ENCODE measurements at regions of chr1 and their contacts with region 1.

Region 1: GRCh38 chr1:112466078-112466660 is 42.6 kb upstream of the WNT2B start:
- DNase-seq: peak; percentile 96
- H3K4me3 ChIP-seq: peak overlapping the region; percentile 25 to 33
- H3K27ac ChIP-seq: peak overlapping the region; percentile 82 to 85
- H3K4me1 ChIP-seq: no peaks in the 10 kb centered on the region
- H3K27me3 ChIP-seq: no peaks in the 10 kb centered on the region
- CTCF ChIP-seq: peak; percentile 83 to 97 (median 91)
- POLR2A ChIP-seq: no peak

Region 2: DNA sequence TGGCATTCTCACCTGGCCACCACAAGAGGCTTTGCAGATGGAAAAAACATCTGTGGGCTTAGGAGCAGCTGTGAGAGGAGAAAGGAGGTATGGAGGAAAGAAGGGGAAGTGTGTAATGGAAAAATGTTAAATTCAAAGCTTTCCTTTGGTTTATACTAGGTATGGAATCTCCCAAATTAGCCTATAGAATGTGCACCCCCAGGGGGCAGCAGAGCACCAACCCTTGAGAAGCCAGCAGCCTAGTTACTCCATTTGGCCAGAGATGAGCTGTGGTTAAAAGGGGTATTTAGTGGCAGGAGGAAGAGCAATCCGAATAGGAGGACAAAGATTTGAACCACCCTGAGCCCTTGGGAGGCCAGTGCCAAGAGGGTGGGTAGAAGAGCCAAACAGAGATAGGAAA is 167.6 kb before region 1 on chr1:
- intact Hi-C with region 1: no loop called
- DNase-seq: no peak
- H3K4me3 ChIP-seq: no peak overlapping the region
- H3K27ac ChIP-seq: no peak overlapping the region
- H3K4me1 ChIP-seq: no peaks in the 10 kb centered on the region
- H3K27me3 ChIP-seq: no peaks in the 10 kb centered on the region
- CTCF ChIP-seq: no peak
- POLR2A ChIP-seq: no peak

Region 3: DNA sequence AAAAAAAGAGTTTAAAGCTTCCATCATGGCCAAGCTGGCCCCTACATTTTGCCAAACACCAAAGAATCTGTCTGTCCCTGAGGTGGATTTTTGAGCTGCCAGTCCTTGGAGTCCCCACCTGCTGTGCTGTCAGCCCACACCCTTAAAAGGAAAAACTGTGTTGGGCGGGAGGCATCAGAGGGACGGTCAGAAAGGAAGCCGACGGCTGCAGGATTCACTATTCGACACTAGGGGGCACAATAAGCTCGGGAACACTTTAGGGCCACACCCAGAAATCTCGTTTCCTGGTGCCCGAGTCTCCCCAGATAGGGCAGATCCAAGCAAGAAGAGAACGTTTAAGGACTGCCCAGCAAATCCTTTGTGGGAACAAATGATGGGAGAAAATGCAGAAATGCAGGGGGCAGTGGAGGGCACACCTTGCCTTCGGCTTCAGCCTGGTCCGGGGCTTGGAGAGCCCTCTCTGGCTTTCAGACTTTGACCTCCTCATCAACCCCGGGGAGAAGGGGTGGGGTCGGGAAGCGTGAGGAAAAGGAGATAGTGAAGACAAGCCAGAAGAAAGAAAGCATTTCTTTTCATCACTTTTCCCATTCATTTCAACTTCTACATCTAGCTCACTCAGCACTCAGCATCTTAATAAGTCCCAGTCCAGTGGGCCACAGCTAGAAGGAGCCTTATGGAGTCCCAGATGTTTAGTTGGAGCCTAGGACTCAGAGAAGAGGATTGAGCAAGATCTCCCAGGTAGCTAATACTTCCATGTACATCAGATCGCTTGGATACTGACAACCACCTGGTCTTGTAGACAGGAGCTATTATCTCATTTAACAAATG is 75.2 kb before region 1 on chr1:
- intact Hi-C with region 1: loop called (anchors 5 kb)
- DNase-seq: peak; percentile 91 to 94
- H3K4me3 ChIP-seq: peak overlapping the region; percentile 34 to 38
- H3K27ac ChIP-seq: peak overlapping the region; percentile 92 to 99
- H3K4me1 ChIP-seq: peaks cover 13 to 18% of the 10 kb centered on the region in 2 donors
- H3K27me3 ChIP-seq: no peaks in the 10 kb centered on the region
- CTCF ChIP-seq: peak; percentile 92 to 95 (median 93)
- POLR2A ChIP-seq: no peak

Region 4: GRCh38 chr1:112625696-112626095 is 159.5 kb after region 1 on chr1:
- intact Hi-C with region 1: no loop called
- DNase-seq: peak in 1 of 2 donors; percentile 25
- H3K4me3 ChIP-seq: no peak overlapping the region
- H3K27ac ChIP-seq: no peak overlapping the region
- H3K4me1 ChIP-seq: peaks cover 0 to 10% of the 10 kb centered on the region in 2 donors
- H3K27me3 ChIP-seq: no peaks in the 10 kb centered on the region
- CTCF ChIP-seq: no peak
- POLR2A ChIP-seq: no peak

Region 5: DNA sequence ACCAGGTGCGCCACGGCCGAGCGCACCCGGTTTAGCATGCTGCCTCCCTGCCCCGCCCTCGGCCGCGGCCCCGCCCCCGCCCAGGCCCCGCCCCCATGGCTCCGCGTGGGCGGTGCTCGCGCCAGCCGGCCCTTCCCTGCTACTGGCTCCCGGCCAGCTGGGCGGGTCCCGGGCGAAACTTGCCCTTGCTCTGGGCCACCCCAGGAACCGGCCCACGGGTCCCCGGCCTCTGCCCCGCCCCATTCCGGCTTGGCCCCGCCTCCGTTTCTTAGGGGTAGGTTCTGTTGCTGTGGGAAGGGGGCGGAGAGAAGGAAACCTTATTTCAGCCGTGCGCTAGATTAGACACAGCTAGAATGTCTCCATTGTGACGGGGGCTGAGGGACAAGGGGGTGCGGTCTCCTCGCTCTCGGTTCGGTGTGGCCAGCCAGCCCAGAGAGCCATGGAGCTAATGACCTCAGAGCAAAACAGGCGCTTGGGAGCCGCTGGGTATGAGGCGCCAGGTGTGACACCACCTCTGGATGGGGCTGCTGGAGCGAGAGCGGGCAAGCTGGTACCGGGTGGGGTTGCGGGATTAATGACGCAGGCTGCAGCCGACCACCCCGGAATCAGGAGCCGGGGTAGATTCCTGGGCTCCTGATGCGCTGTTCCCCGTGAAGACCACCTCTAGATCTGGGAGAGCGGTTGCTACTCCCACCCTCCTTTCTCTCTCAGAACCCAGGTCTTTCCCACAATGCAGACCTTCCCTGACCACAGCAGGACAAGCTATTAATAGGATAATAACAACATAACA is 249.3 kb after region 1 on chr1 and contains the start of gene PPM1J:
- intact Hi-C with region 1: loop called (anchors 10 kb)
- DNase-seq: peak; percentile 98
- H3K4me3 ChIP-seq: peak within 1 kb of the TSS; percentile 39 to 70
- H3K27ac ChIP-seq: peak within 1 kb of the TSS; percentile 77 to 79
- H3K4me1 ChIP-seq: peaks cover 0 to 13% of the 10 kb centered on the region in 2 donors
- H3K27me3 ChIP-seq: no peaks in the 10 kb centered on the region
- CTCF ChIP-seq: no peak
- POLR2A ChIP-seq: peak; percentile 26 to 71
- total RNA-seq, gene PPM1J: 0.90 to 4.2 (median 2.6) TPM in 3 of 4 donors, not detected in the other

Region 6: DNA sequence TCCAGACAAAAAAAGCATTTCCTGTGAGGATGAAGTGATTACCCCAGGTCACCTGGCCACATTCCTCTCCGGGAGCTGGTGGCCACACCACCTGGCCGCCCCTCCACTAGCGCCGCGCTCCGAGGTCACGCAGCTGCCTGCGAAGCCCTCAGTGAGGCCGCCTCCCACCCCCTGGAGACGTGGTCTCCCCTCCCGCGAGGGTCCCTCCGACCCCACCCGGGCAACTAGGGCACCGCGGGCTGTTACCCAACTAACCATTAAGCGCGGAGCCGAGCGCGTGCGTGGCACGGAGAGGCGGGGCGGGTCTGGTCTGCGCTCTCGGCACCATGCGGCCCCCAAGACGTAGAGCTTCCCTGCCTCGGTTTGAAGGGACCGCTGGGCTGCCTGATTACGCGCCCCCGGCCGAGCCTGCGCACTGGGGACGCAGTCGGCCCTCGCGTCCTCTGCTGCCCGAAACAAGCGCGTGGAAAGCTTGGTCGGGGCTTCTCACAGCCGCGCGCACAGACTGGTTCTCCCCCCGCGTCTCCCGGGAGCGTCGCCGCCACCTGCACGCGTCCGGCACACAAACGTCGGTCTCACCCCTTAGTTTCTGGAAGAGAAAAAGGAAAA is 383.4 kb after region 1 on chr1:
- intact Hi-C with region 1: no loop called
- DNase-seq: no peak
- H3K4me3 ChIP-seq: peak overlapping the region; percentile 9 to 15
- H3K27ac ChIP-seq: no peak overlapping the region
- H3K4me1 ChIP-seq: peaks cover 0 to 4% of the 10 kb centered on the region in 2 donors
- H3K27me3 ChIP-seq: peaks cover 0 to 8% of the 10 kb centered on the region in 2 donors
- CTCF ChIP-seq: no peak
- POLR2A ChIP-seq: no peak